Body of pancreas (tissue), 4 donors: ENCODE measurements at regions of chr13 and their contacts with region 1.

Region 1: GRCh38 chr13:45500492-45501174 is 35.9 kb downstream of the COG3 start:
- DNase-seq: no peak
- ATAC-seq: no peak
- H3K4me3 ChIP-seq: no peak overlapping the region
- H3K27ac ChIP-seq: no peak overlapping the region
- H3K4me1 ChIP-seq: peaks cover 17% of the 10 kb centered on the region
- H3K27me3 ChIP-seq: no peaks in the 10 kb centered on the region
- CTCF ChIP-seq: no peak
- POLR2A ChIP-seq: no peak

Region 2: DNA sequence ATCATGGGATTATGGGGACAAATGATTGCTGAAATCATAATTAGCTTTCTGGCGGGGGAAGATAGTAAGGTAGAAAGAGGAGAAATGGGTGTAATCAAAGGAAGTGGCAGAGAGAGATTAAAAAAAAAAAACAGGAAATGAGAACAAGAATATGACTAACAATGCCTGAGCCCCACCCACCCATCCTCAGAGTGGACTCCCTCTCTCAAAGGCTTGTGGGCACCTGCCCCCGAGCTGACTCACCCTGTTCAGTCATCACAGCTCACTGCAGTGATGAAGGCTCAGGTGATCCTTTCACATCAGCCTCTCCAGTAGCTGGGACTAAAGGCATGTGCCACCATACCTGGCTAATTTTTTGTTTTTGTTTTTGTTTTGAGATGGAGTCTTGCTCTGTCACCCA is 133.3 kb before region 1 on chr13:
- intact Hi-C with region 1: loop called (anchors 10 kb)
- DNase-seq: peak; percentile 24 to 70 (median 48)
- ATAC-seq: no peak
- H3K4me3 ChIP-seq: no peak overlapping the region
- H3K27ac ChIP-seq: no peak overlapping the region
- H3K4me1 ChIP-seq: peaks cover 8% of the 10 kb centered on the region
- H3K27me3 ChIP-seq: no peaks in the 10 kb centered on the region
- CTCF ChIP-seq: no peak
- POLR2A ChIP-seq: no peak

Region 3: GRCh38 chr13:45554604-45555109 is 54.0 kb after region 1 on chr13:
- intact Hi-C with region 1: no loop called
- DNase-seq: no peak
- ATAC-seq: no peak
- H3K4me3 ChIP-seq: no peak overlapping the region
- H3K27ac ChIP-seq: no peak overlapping the region
- H3K4me1 ChIP-seq: no peaks in the 10 kb centered on the region
- H3K27me3 ChIP-seq: no peaks in the 10 kb centered on the region
- CTCF ChIP-seq: no peak
- POLR2A ChIP-seq: no peak

Region 4: GRCh38 chr13:45630806-45631205 is 130.2 kb after region 1 on chr13:
- intact Hi-C with region 1: no loop called
- DNase-seq: no peak
- ATAC-seq: no peak
- H3K4me3 ChIP-seq: no peak overlapping the region
- H3K27ac ChIP-seq: no peak overlapping the region
- H3K4me1 ChIP-seq: no peaks in the 10 kb centered on the region
- H3K27me3 ChIP-seq: no peaks in the 10 kb centered on the region
- CTCF ChIP-seq: no peak
- POLR2A ChIP-seq: no peak